Transverse colon (tissue), 4 donors: ENCODE measurements at regions of chr9 and their contacts with region 1.

Region 1: DNA sequence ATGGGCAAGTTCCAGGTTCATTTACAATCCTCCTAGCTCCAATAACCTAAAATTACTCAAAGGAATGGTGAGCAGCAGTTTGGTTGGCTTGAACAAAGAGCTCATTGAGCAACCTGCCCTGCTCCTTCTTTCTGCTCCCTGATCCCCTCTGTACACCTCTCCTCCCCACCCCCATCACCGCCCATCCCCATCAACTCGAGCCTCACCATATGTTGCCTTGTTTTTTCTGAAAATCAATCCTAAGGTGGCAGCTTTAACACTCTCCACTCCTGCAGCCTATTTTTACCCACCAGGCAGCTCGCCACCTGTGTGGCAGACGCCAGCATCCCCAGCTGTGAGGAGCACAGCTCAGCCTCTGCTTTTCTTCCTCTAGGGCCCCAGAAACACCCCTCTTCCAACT is 533.4 kb upstream of the BRINP1 start:
- DNase-seq: no peak
- H3K4me3 ChIP-seq: no peak overlapping the region
- H3K27ac ChIP-seq: no peak overlapping the region
- H3K4me1 ChIP-seq: no peaks in the 10 kb centered on the region
- H3K27me3 ChIP-seq: no peaks in the 10 kb centered on the region
- CTCF ChIP-seq: no peak
- EP300 ChIP-seq: no peak
- POLR2A ChIP-seq: no peak

Region 2: DNA sequence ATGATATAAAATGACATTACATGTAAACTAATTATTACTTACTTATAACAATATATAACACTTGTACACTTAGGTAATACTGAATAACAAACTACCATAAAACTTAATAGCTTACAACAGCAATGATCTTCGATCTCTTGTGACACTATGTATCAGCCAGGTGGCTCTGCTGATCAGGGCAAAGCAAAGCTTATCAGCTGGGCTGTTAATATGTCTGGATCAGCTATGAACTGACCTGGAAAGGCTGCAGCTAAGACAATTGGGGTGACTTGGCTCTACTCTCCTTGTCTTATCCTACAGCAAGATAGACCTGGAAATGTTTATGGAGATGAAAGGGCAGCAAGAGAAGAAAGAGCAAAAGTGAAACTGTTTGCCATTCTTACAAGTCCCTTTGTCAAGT is 1687.1 kb before region 1 on chr9:
- in situ Hi-C with region 1: no loop called
- intact Hi-C with region 1: loop called (anchors 5 kb)
- DNase-seq: no peak
- H3K4me3 ChIP-seq: no peak overlapping the region
- H3K27ac ChIP-seq: no peak overlapping the region
- H3K4me1 ChIP-seq: no peaks in the 10 kb centered on the region
- H3K27me3 ChIP-seq: no peaks in the 10 kb centered on the region
- CTCF ChIP-seq: no peak
- EP300 ChIP-seq: no peak
- POLR2A ChIP-seq: no peak

Region 3: GRCh38 chr9:120109242-120109641 is 206.6 kb after region 1 on chr9:
- in situ Hi-C with region 1: no loop called
- intact Hi-C with region 1: no loop called
- DNase-seq: no peak
- H3K4me3 ChIP-seq: no peak overlapping the region
- H3K27ac ChIP-seq: no peak overlapping the region
- H3K4me1 ChIP-seq: no peaks in the 10 kb centered on the region
- H3K27me3 ChIP-seq: no peaks in the 10 kb centered on the region
- CTCF ChIP-seq: no peak
- EP300 ChIP-seq: no peak
- POLR2A ChIP-seq: no peak